A549 (cell line): ENCODE measurements at regions of chr12 and their contacts with region 1.

Region 1: GRCh38 chr12:9925708-9926393 is 6.3 kb downstream of the CLEC2A start:
- DNase-seq: peak; percentile 18 to 50
- ATAC-seq: peak; percentile 74 to 78; a peak in 5 of 6 replicates
- H3K4me3 ChIP-seq: no peak overlapping the region
- H3K27ac ChIP-seq: no peak overlapping the region
- H3K4me1 ChIP-seq: no peaks in the 10 kb centered on the region
- CTCF ChIP-seq: peak; percentile 70
- EP300 ChIP-seq: no peak
- POLR2A ChIP-seq: no peak
- RAD21 ChIP-seq: peak; percentile 52 to 57

Region 2: GRCh38 chr12:9813821-9814809 is 111.7 kb before region 1 on chr12:
- CTCF ChIA-PET with region 1: interaction called, 10 read pairs
- POLR2A ChIA-PET with region 1: no interaction called
- DNase-seq: peak; percentile 66 to 79
- ATAC-seq: peak; percentile 97 to 100
- H3K4me3 ChIP-seq: peak overlapping the region; percentile 23; the same call in 2 of the 3 replicates
- H3K27ac ChIP-seq: no peak overlapping the region
- H3K4me1 ChIP-seq: 0 out of 3 replicates have a peak, but pooled peaks cover 3% of the 10 kb centered on the region
- CTCF ChIP-seq: peak; percentile 65
- EP300 ChIP-seq: no peak
- POLR2A ChIP-seq: no peak
- RAD21 ChIP-seq: peak; percentile 73 to 85